ENCODE measurements at regions of chr3 and their contacts with region 1.

Region 1: GRCh38 chr3:15332405-15333098 is at the start of gene SH3BP5:
- DNase-seq: peak; percentile 52 to 82 (median 71)
- ATAC-seq: peak; percentile 94
- H3K4me3 ChIP-seq: peak within 1 kb of the TSS; percentile 96
- H3K4me3 Mint-ChIP-seq: peak within 1 kb of the TSS; percentile 93 to 99 (median 95)
- H3K27ac ChIP-seq: peak within 1 kb of the TSS; percentile 86
- H3K27ac Mint-ChIP-seq: peak within 1 kb of the TSS; percentile 87 to 95 (median 91)
- H3K4me1 ChIP-seq: peaks cover 37 to 45% of the 10 kb centered on the region in 2 donors
- H3K4me1 Mint-ChIP-seq: peaks cover 35 to 57% (median 54%) of the 10 kb centered on the region in 7 donors
- H3K27me3 ChIP-seq: no peaks in the 10 kb centered on the region
- H3K27me3 Mint-ChIP-seq: no peaks in the 10 kb centered on the region
- total RNA-seq, gene SH3BP5: 18.5 to 64.7 (median 39.5) TPM

Region 2: DNA sequence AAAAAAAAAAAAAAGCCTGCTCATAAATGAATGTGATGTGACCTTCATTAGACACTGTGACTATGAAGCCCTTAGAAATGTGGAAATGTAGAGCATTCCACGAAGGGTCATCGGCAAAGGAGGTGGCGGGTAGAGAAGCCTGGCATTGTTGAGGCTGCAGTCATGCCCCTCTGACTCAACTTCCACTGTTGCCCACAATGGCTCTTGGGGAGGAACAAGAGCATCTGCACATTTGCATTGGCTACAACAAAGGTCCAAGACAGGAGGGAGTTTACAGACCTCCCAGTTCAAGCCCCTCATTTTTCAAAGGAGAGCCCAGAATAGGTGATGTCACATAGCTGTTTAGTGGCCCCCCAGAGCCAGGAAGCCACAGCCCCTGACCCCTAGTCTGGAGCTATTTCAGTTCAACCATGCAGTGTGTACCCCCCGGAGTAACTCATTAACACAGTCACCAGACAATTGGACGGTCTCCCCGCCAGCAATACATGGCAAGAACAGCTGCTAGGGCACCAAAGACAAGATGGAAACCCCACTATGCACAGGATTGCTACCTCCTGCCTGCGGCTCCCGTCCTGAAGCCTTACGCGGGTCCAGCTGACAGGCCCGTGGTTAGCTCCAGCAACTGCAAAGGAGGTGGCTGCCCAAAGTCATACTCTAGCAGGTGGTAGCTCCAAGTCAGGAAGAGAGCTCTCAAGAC is 56.4 kb before region 1 on chr3:
- CTCF ChIA-PET with region 1: interaction called, 10 read pairs
- POLR2A ChIA-PET with region 1: interaction called, 10 read pairs
- intact Hi-C with region 1: loop called in 1 of 2 experiments (anchors 1 kb)
- DNase-seq: no peak
- ATAC-seq: no peak
- H3K4me3 ChIP-seq: no peak overlapping the region
- H3K4me3 Mint-ChIP-seq: peak overlapping the region in 2 of 10 donors; percentile 17 to 21
- H3K27ac ChIP-seq: no peak overlapping the region
- H3K27ac Mint-ChIP-seq: peak overlapping the region in 4 of 9 donors; percentile 21 to 93 (median 60)
- H3K4me1 ChIP-seq: peaks cover 47 to 61% of the 10 kb centered on the region in 2 donors
- H3K4me1 Mint-ChIP-seq: peaks cover 65 to 97% (median 90%) of the 10 kb centered on the region in 7 donors
- H3K27me3 ChIP-seq: no peaks in the 10 kb centered on the region
- H3K27me3 Mint-ChIP-seq: peaks cover 0 to 3% (median 0%) of the 10 kb centered on the region in 5 donors

Region 3: DNA sequence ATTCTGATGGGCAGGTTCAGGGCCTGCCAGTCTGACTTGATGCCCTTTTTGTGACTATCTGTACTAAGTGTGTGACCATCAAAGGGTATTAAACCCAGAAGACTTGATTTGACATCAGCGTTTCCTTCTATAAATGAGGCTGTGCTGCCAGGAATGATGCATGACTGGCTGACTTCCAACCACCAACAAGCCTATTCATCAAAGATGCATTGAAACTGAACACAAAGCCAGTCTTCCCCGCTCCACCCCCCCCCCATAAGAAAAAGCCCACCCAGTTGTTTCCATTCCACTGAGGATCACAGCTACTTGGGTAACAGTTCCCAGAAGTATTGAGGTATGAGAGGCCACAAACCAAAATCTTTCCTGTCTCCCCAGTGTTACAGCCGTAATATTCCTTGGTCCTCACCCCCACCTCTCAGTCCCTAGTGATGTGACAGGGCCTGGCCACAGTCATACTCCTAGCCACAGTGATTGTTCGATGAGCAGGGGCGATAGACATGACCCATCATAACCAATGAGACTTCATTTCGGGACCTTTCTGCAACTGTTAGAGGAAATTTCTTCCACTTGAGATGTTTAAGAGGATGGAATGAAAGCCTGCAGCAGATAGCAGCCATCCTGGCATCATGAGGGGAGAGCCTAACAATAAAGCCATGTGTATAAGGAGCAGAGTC is 22.8 kb before region 1 on chr3:
- CTCF ChIA-PET with region 1: interaction called, 5 read pairs
- POLR2A ChIA-PET with region 1: no interaction called
- intact Hi-C with region 1: loop called (anchors 1 to 2 kb)
- DNase-seq: no peak
- ATAC-seq: no peak
- H3K4me3 ChIP-seq: no peak overlapping the region
- H3K4me3 Mint-ChIP-seq: peak overlapping the region in 6 of 10 donors; percentile 17 to 69 (median 46)
- H3K27ac ChIP-seq: no peak overlapping the region
- H3K27ac Mint-ChIP-seq: peak overlapping the region in 8 of 9 donors; percentile 23 to 89 (median 66)
- H3K4me1 ChIP-seq: peaks cover 44 to 52% of the 10 kb centered on the region in 2 donors
- H3K4me1 Mint-ChIP-seq: peaks cover 36 to 72% (median 63%) of the 10 kb centered on the region in 7 donors
- H3K27me3 ChIP-seq: no peaks in the 10 kb centered on the region
- H3K27me3 Mint-ChIP-seq: no peaks in the 10 kb centered on the region

Region 4: GRCh38 chr3:15345608-15346137 is 13.1 kb after region 1 on chr3:
- CTCF ChIA-PET with region 1: interaction called, 12 read pairs
- POLR2A ChIA-PET with region 1: interaction called, 15 read pairs
- intact Hi-C with region 1: loop called in 1 of 2 experiments (anchors 2 kb)
- DNase-seq: no peak
- ATAC-seq: peak; percentile 51
- H3K4me3 ChIP-seq: no peak overlapping the region
- H3K4me3 Mint-ChIP-seq: peak overlapping the region in 2 of 10 donors; percentile 39 to 45
- H3K27ac ChIP-seq: no peak overlapping the region
- H3K27ac Mint-ChIP-seq: peak overlapping the region in 8 of 9 donors; percentile 14 to 98 (median 56)
- H3K4me1 ChIP-seq: peaks cover 34 to 37% of the 10 kb centered on the region in 2 donors
- H3K4me1 Mint-ChIP-seq: peaks cover 38 to 80% (median 68%) of the 10 kb centered on the region in 7 donors
- H3K27me3 ChIP-seq: no peaks in the 10 kb centered on the region
- H3K27me3 Mint-ChIP-seq: peaks cover 0 to 21% (median 0%) of the 10 kb centered on the region in 5 donors

Region 5: GRCh38 chr3:15361494-15362212 is 29.1 kb after region 1 on chr3:
- CTCF ChIA-PET with region 1: no interaction called
- POLR2A ChIA-PET with region 1: interaction called, 4 read pairs
- intact Hi-C with region 1: loop called (anchors 1 to 2 kb)
- DNase-seq: peak in 1 of 9 donors; percentile 59
- ATAC-seq: peak; percentile 49
- H3K4me3 ChIP-seq: no peak overlapping the region
- H3K4me3 Mint-ChIP-seq: peak overlapping the region; percentile 38 to 65 (median 54)
- H3K27ac ChIP-seq: no peak overlapping the region
- H3K27ac Mint-ChIP-seq: peak overlapping the region in 8 of 9 donors; percentile 37 to 73 (median 56)
- H3K4me1 ChIP-seq: peaks cover 21 to 29% of the 10 kb centered on the region in 2 donors
- H3K4me1 Mint-ChIP-seq: peaks cover 25 to 57% (median 38%) of the 10 kb centered on the region in 7 donors
- H3K27me3 ChIP-seq: no peaks in the 10 kb centered on the region
- H3K27me3 Mint-ChIP-seq: no peaks in the 10 kb centered on the region

Region 6: GRCh38 chr3:15743587-15744009 is 411.0 kb after region 1 on chr3:
- CTCF ChIA-PET with region 1: no interaction called
- POLR2A ChIA-PET with region 1: no interaction called
- intact Hi-C with region 1: no loop called
- DNase-seq: no peak
- ATAC-seq: no peak
- H3K4me3 ChIP-seq: no peak overlapping the region
- H3K4me3 Mint-ChIP-seq: no peak overlapping the region
- H3K27ac ChIP-seq: no peak overlapping the region
- H3K27ac Mint-ChIP-seq: peak overlapping the region in 4 of 9 donors; percentile 3 to 88 (median 19)
- H3K4me1 ChIP-seq: peaks cover 0 to 9% of the 10 kb centered on the region in 2 donors
- H3K4me1 Mint-ChIP-seq: peaks cover 9 to 54% (median 39%) of the 10 kb centered on the region in 7 donors
- H3K27me3 ChIP-seq: no peaks in the 10 kb centered on the region
- H3K27me3 Mint-ChIP-seq: no peaks in the 10 kb centered on the region